AG04450 (cell line): ENCODE measurements at regions of chr3 and their contacts with region 1.

Region 1: DNA sequence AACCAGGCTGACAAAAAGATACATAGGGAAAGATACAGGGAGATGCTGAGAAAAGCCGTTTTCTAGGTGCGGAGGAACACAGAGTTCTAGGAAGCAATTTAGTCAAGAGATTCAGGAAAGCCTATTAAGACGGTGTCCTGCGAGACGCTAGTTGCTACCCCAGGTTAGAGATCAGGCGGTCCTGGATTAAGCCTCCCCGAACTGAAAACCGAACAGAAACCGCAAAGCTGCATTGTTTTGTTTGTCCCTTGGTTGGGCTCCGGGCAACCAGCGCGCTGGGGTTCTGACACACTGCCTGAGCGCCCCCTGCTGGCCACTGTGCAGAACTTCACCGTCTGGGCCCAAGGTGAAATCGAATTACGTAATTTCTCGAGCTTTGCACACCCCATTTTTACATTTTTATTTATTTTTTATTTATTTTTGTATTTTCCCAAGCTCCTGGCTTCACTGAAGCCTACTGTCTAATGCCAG is 37.3 kb upstream of the NDUFB4 start:
- DNase-seq: peak; percentile 76
- H3K4me3 ChIP-seq: peak overlapping the region; percentile 72
- H3K27ac ChIP-seq: peak overlapping the region; percentile 86
- H3K27me3 ChIP-seq: no peaks in the 10 kb centered on the region
- CTCF ChIP-seq: peak; percentile 92

Region 2: GRCh38 chr3:120357807-120358206 is 201.0 kb before region 1 on chr3:
- CTCF ChIA-PET with region 1: no interaction called
- POLR2A ChIA-PET with region 1: no interaction called
- DNase-seq: no peak
- H3K4me3 ChIP-seq: no peak overlapping the region
- H3K27ac ChIP-seq: no peak overlapping the region
- H3K27me3 ChIP-seq: peaks cover 16% of the 10 kb centered on the region
- CTCF ChIP-seq: no peak

Region 3: GRCh38 chr3:120369000-120369399 is 189.8 kb before region 1 on chr3:
- CTCF ChIA-PET with region 1: no interaction called
- POLR2A ChIA-PET with region 1: no interaction called
- DNase-seq: no peak
- H3K4me3 ChIP-seq: no peak overlapping the region
- H3K27ac ChIP-seq: no peak overlapping the region
- H3K27me3 ChIP-seq: peaks cover 11% of the 10 kb centered on the region
- CTCF ChIP-seq: no peak

Region 4: GRCh38 chr3:120404876-120405275 is 153.9 kb before region 1 on chr3:
- CTCF ChIA-PET with region 1: interaction called, 15 read pairs
- POLR2A ChIA-PET with region 1: no interaction called
- DNase-seq: no peak
- H3K4me3 ChIP-seq: no peak overlapping the region
- H3K27ac ChIP-seq: no peak overlapping the region
- H3K27me3 ChIP-seq: no peaks in the 10 kb centered on the region
- CTCF ChIP-seq: no peak

Region 5: GRCh38 chr3:120432150-120432860 is 126.5 kb before region 1 on chr3:
- CTCF ChIA-PET with region 1: interaction called, 209 read pairs
- POLR2A ChIA-PET with region 1: interaction called, 6 read pairs
- DNase-seq: peak; percentile 77
- H3K4me3 ChIP-seq: no peak overlapping the region
- H3K27ac ChIP-seq: peak overlapping the region; percentile 77
- H3K27me3 ChIP-seq: no peaks in the 10 kb centered on the region
- CTCF ChIP-seq: no peak

Region 6: DNA sequence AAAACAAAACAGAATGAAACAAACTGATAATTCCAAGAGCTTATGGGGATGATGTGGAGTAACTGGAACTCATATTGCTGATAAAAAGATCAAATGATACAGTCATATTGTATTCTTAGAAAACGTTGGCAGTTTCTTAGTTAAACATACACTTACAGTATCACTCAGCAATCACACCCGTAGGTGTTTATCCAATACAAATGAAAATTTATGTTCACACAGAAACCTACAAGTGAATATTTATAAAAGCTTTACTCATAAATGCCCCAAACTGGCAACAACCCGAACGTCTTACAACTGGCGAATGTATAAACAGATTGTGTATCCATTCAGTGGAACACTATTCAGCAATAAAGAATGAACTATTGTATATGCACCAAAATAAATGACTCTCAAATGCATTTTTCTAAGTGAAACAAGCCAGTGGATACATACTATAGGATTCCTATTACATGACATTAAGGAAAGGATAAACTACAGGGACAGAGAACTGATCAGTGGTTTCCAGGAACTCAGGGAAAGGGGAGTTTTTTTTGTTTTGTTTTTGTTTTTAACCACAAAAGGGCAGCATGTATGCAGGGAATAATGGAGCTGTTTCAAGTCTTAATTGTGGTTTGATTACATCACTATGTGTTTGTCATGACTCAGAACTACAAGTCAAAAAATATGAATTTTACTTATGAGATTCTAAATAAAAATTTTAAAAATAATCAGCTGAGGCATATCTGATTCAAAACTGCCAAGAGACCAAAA is 34.5 kb before region 1 on chr3:
- CTCF ChIA-PET with region 1: interaction called, 10 read pairs
- POLR2A ChIA-PET with region 1: no interaction called
- DNase-seq: no peak
- H3K4me3 ChIP-seq: no peak overlapping the region
- H3K27ac ChIP-seq: no peak overlapping the region
- H3K27me3 ChIP-seq: no peaks in the 10 kb centered on the region
- CTCF ChIP-seq: no peak

Region 7: DNA sequence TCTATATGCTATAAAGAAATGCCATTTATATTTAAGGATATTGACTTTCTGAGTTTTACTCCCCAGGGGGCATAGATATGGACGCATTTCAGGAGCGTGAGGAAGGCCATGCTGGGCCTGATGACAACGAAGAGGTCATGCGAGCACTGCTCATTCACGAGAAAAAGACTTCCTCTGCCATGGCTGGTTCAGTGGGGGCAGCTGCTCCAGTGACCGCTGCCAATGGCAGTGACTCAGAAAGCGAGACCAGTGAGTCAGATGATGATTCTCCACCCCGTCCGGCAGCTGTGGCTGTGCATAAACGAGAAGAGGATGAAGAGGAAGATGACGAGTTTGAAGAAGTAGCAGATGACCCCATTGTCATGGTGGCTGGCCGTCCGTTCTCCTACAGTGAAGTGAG is 222.2 kb after region 1 on chr3:
- CTCF ChIA-PET with region 1: interaction called, 16 read pairs
- POLR2A ChIA-PET with region 1: no interaction called
- DNase-seq: peak; percentile 44
- H3K4me3 ChIP-seq: no peak overlapping the region; the same call in 1 of the 2 replicates
- H3K27ac ChIP-seq: peak overlapping the region; percentile 54
- H3K27me3 ChIP-seq: no peaks in the 10 kb centered on the region
- CTCF ChIP-seq: no peak